ENCODE measurements at regions of chr2 and their contacts with region 1.

Region 1: GRCh38 chr2:226618875-226619605 is 180.6 kb downstream of the IRS1 start:
- DNase-seq: no peak
- ATAC-seq: no peak
- H3K4me3 ChIP-seq: no peak overlapping the region
- H3K27ac ChIP-seq: no peak overlapping the region
- H3K4me1 ChIP-seq: peaks cover 10% of the 10 kb centered on the region
- H3K27me3 ChIP-seq: no peaks in the 10 kb centered on the region
- CTCF ChIP-seq: no peak

Region 2: DNA sequence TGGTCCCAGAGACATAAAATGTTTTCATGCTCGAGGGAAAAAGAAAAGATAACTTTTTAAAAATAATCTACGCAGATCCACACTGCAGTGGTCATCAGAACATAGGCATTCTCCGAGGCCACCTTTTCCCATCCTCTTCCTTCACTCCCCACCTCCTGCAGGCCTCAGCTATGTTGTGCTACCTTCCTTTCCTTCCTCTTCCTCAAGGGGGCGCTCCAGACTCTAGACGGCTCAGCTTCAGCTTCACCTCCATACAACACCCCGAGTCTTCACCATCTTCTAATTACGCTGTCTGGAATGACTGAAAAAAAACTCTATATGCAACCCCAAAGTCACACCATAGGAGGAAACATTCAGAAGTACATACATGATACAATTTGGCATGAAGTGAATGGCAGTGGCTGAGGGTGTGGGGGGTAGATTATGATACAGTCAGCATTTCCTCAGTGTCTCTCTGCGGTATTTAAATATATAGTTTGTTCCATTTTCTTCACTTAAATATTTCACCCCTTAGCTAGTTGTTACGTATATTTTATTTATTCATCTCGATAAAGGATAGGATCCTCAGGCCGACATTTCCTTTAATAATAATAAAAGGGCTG is 403.0 kb before region 1 on chr2:
- CTCF ChIA-PET with region 1: no interaction called
- POLR2A ChIA-PET with region 1: no interaction called
- intact Hi-C with region 1: loop called (anchors 10 kb)
- DNase-seq: peak; percentile 69
- ATAC-seq: peak; percentile 63
- H3K4me3 ChIP-seq: no peak overlapping the region
- H3K27ac ChIP-seq: no peak overlapping the region
- H3K4me1 ChIP-seq: peaks cover 32% of the 10 kb centered on the region
- H3K27me3 ChIP-seq: no peaks in the 10 kb centered on the region
- CTCF ChIP-seq: peak; percentile 89

Region 3: DNA sequence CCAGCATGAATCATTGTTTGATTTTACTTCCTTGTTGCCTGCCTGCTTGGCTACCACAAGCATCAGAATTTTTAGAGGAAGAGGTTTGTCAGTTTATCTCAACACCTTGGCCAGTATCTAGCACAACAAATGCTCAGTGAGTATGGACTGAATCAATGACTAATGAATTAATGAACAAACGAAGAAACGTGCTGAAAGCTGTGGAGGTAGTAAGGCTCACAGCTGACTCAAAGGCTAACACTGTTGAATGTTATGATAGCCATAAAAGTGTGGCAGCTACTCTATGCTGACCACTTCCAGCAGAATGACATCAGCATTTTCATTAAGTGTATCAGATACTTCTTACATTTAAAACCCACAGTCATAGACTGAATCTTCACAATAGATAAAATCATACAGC is 362.8 kb before region 1 on chr2:
- CTCF ChIA-PET with region 1: no interaction called
- POLR2A ChIA-PET with region 1: no interaction called
- intact Hi-C with region 1: loop called (anchors 1 kb)
- DNase-seq: peak; percentile 76
- ATAC-seq: peak; percentile 95
- H3K4me3 ChIP-seq: no peak overlapping the region
- H3K27ac ChIP-seq: peak overlapping the region; percentile 64
- H3K4me1 ChIP-seq: peaks cover 11% of the 10 kb centered on the region
- H3K27me3 ChIP-seq: no peaks in the 10 kb centered on the region
- CTCF ChIP-seq: no peak

Region 4: DNA sequence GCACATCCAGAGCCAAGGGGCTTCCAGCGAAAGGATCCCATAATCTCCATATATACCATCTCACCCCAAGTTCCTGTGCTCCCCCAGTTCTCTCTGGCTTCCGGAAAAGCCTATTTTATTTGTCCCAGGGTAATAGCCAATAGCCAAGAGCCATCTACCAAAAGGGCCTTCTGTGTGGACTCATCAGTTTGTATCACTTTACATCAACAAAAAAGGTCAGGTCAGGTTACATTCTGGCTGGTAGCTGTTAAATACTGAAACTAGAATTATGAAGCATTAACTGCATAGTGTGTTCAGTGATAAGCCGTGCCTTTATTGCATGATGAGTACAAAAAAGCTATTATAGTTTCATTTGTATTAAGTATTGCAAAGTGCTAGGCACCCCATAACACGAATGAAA is 43.1 kb before region 1 on chr2:
- CTCF ChIA-PET with region 1: no interaction called
- POLR2A ChIA-PET with region 1: no interaction called
- intact Hi-C with region 1: no loop called
- DNase-seq: no peak
- ATAC-seq: no peak
- H3K4me3 ChIP-seq: no peak overlapping the region
- H3K27ac ChIP-seq: no peak overlapping the region
- H3K4me1 ChIP-seq: peaks cover 8% of the 10 kb centered on the region; the same call in 1 of the 2 replicates
- H3K27me3 ChIP-seq: no peaks in the 10 kb centered on the region
- CTCF ChIP-seq: no peak